ENCODE measurements at regions of chr17 and their contacts with region 1.

Region 1: GRCh38 chr17:10844621-10845387 is 6.9 kb upstream of the PIRT start:
- DNase-seq: no peak
- H3K4me3 ChIP-seq: peak overlapping the region; percentile 27 to 62 (median 56)
- H3K27ac ChIP-seq: peak overlapping the region in 3 of 4 donors; percentile 34 to 77 (median 69)
- H3K4me1 ChIP-seq: peaks cover 3 to 21% (median 5%) of the 10 kb centered on the region in 3 donors
- H3K27me3 ChIP-seq: no peaks in the 10 kb centered on the region
- CTCF ChIP-seq: peak; percentile 95 to 99 (median 98)
- POLR2A ChIP-seq: no peak

Region 2: DNA sequence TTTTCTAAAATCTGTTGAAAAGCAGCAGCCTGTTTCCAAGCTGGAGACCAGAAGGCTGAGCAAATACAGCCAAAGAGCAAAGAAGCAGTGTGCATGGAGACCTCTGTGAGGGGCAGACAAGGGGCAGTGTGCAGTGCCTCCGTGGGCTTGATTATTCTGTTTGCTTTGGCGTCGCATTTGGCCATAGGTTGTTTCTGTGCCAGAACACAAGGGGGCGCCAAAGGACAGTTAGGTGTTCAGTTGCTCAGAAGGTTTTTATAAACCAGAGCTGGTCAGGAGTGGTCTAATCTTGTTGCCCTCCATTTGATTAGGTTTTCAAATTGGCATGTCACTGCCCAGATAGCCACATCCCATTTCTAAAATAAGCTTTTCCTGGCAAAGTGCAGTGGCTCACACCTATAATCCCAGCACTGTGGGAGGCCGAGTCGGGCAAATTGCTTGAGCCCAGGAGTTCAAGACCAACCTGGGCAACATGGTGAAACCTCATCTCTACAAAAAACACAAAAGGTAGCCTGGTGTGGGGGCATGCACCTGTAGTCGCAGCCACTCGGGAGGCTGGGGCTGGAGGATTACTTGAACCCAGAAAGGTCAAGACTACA is 198.3 kb before region 1 on chr17:
- intact Hi-C with region 1: loop called (anchors 10 kb)
- DNase-seq: no peak
- H3K4me3 ChIP-seq: no peak overlapping the region
- H3K27ac ChIP-seq: no peak overlapping the region
- H3K4me1 ChIP-seq: peaks cover 0 to 3% (median 0%) of the 10 kb centered on the region in 3 donors
- H3K27me3 ChIP-seq: no peaks in the 10 kb centered on the region
- CTCF ChIP-seq: peak; percentile 66 to 80 (median 76)
- POLR2A ChIP-seq: no peak

Region 3: GRCh38 chr17:10737168-10737622 is 107.6 kb before region 1 on chr17:
- intact Hi-C with region 1: loop called (anchors 2 kb)
- DNase-seq: no peak
- H3K4me3 ChIP-seq: no peak overlapping the region
- H3K27ac ChIP-seq: peak overlapping the region in 3 of 4 donors; percentile 30 to 62 (median 43)
- H3K4me1 ChIP-seq: peaks cover 0 to 19% (median 0%) of the 10 kb centered on the region in 3 donors
- H3K27me3 ChIP-seq: no peaks in the 10 kb centered on the region
- CTCF ChIP-seq: peak; percentile 36 to 89 (median 78)
- POLR2A ChIP-seq: no peak

Region 4: GRCh38 chr17:10776381-10776780 is 68.4 kb before region 1 on chr17:
- intact Hi-C with region 1: loop called (anchors 5 kb)
- DNase-seq: no peak
- H3K4me3 ChIP-seq: no peak overlapping the region
- H3K27ac ChIP-seq: no peak overlapping the region
- H3K4me1 ChIP-seq: peaks cover 0 to 36% (median 0%) of the 10 kb centered on the region in 3 donors
- H3K27me3 ChIP-seq: no peaks in the 10 kb centered on the region
- CTCF ChIP-seq: no peak
- POLR2A ChIP-seq: no peak

Region 5: GRCh38 chr17:10798332-10798749 is 46.5 kb before region 1 on chr17:
- intact Hi-C with region 1: no loop called
- DNase-seq: no peak
- H3K4me3 ChIP-seq: peak overlapping the region in 2 of 4 donors; percentile 12 to 14
- H3K27ac ChIP-seq: peak overlapping the region; percentile 70 to 88 (median 84)
- H3K4me1 ChIP-seq: peaks cover 11 to 79% (median 41%) of the 10 kb centered on the region in 3 donors
- H3K27me3 ChIP-seq: no peaks in the 10 kb centered on the region
- CTCF ChIP-seq: no peak
- POLR2A ChIP-seq: no peak

Region 6: DNA sequence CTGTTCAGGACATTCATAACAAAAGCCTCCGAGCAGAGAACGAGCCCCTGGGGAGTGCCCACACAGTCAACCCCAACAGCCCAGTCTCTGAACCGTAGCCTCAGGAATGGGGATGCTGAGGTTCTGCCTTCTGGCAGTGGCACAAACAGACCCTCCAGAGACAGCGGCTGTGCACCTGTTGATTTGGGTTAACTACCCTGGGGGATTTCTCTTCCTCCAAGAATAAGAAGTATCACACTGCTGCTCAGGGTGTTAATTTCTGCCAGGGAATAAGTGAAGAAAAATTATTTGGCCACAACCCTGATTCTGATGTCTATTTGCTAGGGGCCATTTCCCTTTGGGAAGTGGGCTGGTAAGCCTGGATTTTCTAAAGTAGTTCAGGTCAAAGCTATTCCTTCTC is 44.1 kb after region 1 on chr17:
- intact Hi-C with region 1: no loop called
- DNase-seq: no peak
- H3K4me3 ChIP-seq: no peak overlapping the region
- H3K27ac ChIP-seq: no peak overlapping the region
- H3K4me1 ChIP-seq: no peaks in the 10 kb centered on the region
- H3K27me3 ChIP-seq: peaks cover 0 to 6% (median 0%) of the 10 kb centered on the region in 4 donors
- CTCF ChIP-seq: no peak
- POLR2A ChIP-seq: no peak

Measured in esophagus squamous epithelium (tissue), 5 donors.